A549 (cell line): ENCODE measurements at regions of chr17 and their contacts with region 1.

Region 1: GRCh38 chr17:44199553-44200477 is at the start of gene ATXN7L3:
- DNase-seq: peak; percentile 99
- ATAC-seq: peak; percentile 66 to 87
- H3K4me3 ChIP-seq: peak within 1 kb of the TSS; percentile 87
- H3K27ac ChIP-seq: peak within 1 kb of the TSS; percentile 98 to 100
- H3K4me1 ChIP-seq: peaks cover 35% of the 10 kb centered on the region
- CTCF ChIP-seq: no peak
- EP300 ChIP-seq: 0 out of 5 replicates have a peak, but pooled peaks of 1 of the 2 experiments have one; percentile 29
- POLR2A ChIP-seq: peak; percentile 40; the same call in 1 of the 2 replicates
- RAD21 ChIP-seq: no peak
- polyA plus RNA-seq, gene ATXN7L3: 65.7 and 72.7 TPM in 2 replicates

Region 2: DNA sequence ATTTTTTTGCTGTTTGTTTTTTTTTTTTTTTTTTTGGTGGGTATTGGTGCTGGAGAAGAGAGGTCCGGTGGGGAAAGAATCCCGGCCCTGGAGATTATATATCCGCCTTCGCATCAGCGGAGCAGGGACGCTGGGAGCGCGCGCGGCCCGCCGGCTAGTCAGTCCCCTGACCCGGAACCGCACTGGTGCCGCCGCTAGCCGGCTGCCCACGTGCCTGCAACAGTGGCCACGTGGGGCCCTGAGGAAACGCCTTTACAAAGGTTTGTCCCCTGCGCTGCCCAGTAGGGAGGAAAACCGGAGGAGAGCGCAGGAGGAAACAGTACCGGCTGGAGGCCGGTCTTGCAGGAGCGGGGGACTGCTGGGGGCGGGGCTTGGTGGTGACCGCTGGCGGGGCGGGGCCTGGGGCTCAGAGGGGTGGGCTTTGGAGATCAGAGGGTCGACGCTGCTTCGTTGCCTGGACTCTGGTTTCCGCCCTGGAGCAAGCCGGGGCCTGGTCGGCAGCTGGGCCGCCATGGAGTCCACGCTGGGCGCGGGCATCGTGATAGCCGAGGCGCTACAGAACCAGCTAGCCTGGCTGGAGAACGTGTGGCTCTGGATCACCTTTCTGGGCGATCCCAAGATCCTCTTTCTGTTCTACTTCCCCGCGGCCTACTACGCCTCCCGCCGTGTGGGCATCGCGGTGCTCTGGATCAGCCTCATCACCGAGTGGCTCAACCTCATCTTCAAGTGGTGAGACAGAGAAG is 129.2 kb before region 1 on chr17 and contains the start of gene G6PC3:
- CTCF ChIA-PET with region 1: no interaction called
- POLR2A ChIA-PET with region 1: no interaction called
- DNase-seq: peak; percentile 99 to 100
- ATAC-seq: peak; percentile 80 to 92
- H3K4me3 ChIP-seq: peak within 1 kb of the TSS; percentile 69
- H3K27ac ChIP-seq: peak within 1 kb of the TSS; percentile 92 to 93
- H3K4me1 ChIP-seq: peaks cover 19% of the 10 kb centered on the region
- CTCF ChIP-seq: no peak
- EP300 ChIP-seq: no peak
- POLR2A ChIP-seq: peak; percentile 97
- RAD21 ChIP-seq: peak; percentile 4 to 43; a peak in 3 of 5 replicates
- polyA plus RNA-seq, gene G6PC3: 104 TPM in 2 replicates

Region 3: DNA sequence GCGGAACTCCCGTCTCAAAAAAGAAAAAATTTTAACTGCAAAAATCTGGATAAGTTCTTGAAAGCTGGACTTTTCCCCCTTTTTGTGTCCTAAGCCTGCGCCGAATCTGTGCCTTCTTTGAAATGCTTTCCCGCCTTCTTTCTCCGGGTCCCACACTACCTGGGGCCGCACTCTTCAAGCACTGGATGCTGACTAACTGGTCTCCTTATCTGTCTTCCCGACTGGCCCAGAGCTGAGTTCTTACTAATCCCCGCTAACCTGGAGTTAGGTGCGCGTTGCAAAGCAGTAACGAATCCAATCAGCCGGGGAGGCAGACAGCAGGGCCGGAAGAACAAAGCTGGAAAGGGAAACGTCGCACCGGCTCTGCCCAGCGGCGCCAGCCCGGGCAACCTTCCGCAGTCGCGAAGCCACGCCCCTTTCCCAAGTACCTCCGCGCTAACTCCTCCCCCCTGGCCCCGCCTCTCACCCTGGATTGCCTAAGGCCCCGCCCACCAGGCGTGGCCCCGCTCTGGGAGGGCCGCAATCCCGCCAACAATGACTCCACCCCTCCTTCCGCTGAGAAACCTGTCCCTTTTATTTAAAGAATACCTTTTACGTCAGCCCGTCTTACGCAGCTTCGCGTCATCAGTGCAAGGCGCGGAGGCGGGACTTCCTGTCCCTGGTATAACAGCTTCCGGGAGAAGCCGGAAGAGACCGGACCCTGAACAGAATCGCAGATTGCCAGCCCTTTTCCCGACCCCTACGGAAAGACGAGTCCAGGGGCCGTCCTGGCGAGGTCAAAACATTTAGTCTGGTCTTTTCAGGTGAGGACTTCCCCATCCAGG is 13.3 kb before region 1 on chr17 and contains the start of gene TMUB2:
- CTCF ChIA-PET with region 1: interaction called, 5 read pairs
- POLR2A ChIA-PET with region 1: interaction called, 28 read pairs
- DNase-seq: peak; percentile 100
- ATAC-seq: peak; percentile 85 to 88
- H3K4me3 ChIP-seq: peak within 1 kb of the TSS; percentile 87
- H3K27ac ChIP-seq: peak within 1 kb of the TSS; percentile 92 to 97
- H3K4me1 ChIP-seq: peaks cover 24% of the 10 kb centered on the region
- CTCF ChIP-seq: no peak
- EP300 ChIP-seq: no peak
- POLR2A ChIP-seq: peak; percentile 98
- RAD21 ChIP-seq: no peak
- polyA plus RNA-seq, gene TMUB2: 36.2 and 43.3 TPM in 2 replicates

Region 4: DNA sequence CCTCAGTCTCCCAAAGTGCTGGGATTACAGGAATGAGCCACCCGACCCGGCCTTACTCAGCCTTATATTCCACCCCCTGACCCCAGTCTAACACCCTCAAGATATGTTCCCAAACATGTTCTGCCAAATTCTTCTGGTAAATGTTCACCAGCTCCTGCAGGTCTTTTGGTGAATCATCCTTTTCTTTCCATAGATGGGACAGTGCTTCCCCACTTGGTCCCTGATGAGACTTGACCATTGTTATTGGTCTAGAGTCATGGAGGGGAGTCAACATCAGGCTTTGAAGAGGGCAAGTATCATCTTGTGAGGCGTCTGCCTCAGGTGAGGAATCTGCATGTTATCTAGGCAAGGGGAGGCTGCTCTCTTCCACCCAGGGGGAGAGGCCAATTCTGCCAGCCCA is 98.2 kb after region 1 on chr17:
- CTCF ChIA-PET with region 1: no interaction called
- POLR2A ChIA-PET with region 1: no interaction called
- DNase-seq: no peak
- ATAC-seq: no peak; a peak in 1 of 6 replicates
- H3K4me3 ChIP-seq: no peak overlapping the region
- H3K27ac ChIP-seq: no peak overlapping the region
- H3K4me1 ChIP-seq: no peaks in the 10 kb centered on the region
- CTCF ChIP-seq: no peak
- EP300 ChIP-seq: no peak
- POLR2A ChIP-seq: no peak
- RAD21 ChIP-seq: no peak

Region 5: DNA sequence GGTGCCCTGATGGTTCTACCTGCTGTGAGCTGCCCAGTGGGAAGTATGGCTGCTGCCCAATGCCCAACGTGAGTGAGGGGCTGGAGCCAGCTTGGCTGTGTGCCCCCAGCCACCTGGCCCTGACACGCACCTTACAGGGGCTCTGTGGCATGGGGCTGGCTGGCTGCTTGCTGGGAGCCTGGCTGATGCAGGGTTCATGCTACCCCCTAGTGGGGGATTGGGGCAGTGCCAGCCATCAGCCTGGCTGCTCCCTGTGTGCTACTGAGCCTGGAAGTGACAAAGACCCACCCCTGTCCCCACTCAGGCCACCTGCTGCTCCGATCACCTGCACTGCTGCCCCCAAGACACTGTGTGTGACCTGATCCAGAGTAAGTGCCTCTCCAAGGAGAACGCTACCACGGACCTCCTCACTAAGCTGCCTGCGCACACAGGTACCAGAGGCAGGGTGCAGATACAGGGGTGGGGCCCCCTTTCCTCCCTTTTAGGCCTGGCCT is 151.0 kb after region 1 on chr17:
- CTCF ChIA-PET with region 1: interaction called, 10 read pairs
- POLR2A ChIA-PET with region 1: interaction called, 7 read pairs
- DNase-seq: peak; percentile 73 to 96
- ATAC-seq: peak; percentile 78 to 92
- H3K4me3 ChIP-seq: no peak overlapping the region
- H3K27ac ChIP-seq: no peak overlapping the region
- H3K4me1 ChIP-seq: peaks cover 6% of the 10 kb centered on the region
- CTCF ChIP-seq: peak; percentile 81
- EP300 ChIP-seq: no peak
- POLR2A ChIP-seq: no peak
- RAD21 ChIP-seq: peak; percentile 75 to 85